Caco-2 (cell line): ENCODE measurements at regions of chr1 and their contacts with region 1.

Region 1: DNA sequence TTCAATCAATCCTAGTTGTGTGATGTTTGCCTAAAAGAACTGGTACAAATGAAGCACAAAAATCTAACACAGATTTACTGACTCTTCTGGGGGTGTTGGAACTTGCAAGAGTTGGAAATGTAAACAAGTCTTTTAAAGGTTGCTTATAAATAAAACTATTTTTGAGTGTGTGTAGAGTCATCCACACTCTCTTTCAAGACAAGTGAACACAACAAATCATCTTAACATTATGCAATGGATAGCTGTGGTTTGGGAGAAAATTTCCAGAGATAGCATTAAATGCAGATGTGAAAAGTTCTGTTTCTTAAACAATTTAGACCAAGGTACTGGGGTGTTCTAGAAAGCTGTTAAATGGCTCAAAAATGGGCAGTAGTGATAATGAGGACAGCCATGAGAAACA is 28.7 kb downstream of the C1orf87 start:
- DNase-seq: no peak
- H3K4me3 ChIP-seq: no peak overlapping the region
- H3K4me3 Mint-ChIP-seq: no peak overlapping the region
- H3K27ac Mint-ChIP-seq: no peak overlapping the region
- H3K4me1 ChIP-seq: no peaks in the 10 kb centered on the region
- H3K4me1 Mint-ChIP-seq: no peaks in the 10 kb centered on the region
- H3K27me3 ChIP-seq: no peaks in the 10 kb centered on the region
- H3K27me3 Mint-ChIP-seq: no peaks in the 10 kb centered on the region
- CTCF ChIP-seq: no peak

Region 2: DNA sequence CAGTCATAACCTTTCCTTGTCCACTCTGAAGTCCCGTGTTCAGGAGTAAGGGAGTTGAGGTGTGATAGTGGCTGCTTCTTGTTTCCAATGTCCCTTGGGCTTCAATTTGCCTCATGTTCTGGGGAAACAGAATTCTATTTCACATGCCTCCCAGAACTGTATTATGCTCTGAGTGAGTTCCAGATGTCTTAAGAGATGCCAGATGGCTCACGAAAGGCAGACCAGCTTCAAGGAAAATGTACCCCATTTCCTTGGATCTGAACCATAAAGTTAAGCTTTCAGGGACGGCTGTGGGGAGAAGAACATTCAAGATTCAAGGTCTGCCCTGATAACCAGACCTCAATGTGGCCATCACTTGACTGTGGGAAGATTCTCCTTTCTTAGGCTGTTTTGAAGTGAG is 13.7 kb before region 1 on chr1:
- CTCF ChIA-PET with region 1: no interaction called
- POLR2A ChIA-PET with region 1: no interaction called
- intact Hi-C with region 1: no loop called
- DNase-seq: no peak
- H3K4me3 ChIP-seq: no peak overlapping the region
- H3K4me3 Mint-ChIP-seq: no peak overlapping the region
- H3K27ac Mint-ChIP-seq: no peak overlapping the region
- H3K4me1 ChIP-seq: no peaks in the 10 kb centered on the region
- H3K4me1 Mint-ChIP-seq: no peaks in the 10 kb centered on the region
- H3K27me3 ChIP-seq: no peaks in the 10 kb centered on the region
- H3K27me3 Mint-ChIP-seq: peaks cover 16% of the 10 kb centered on the region
- CTCF ChIP-seq: no peak

Region 3: DNA sequence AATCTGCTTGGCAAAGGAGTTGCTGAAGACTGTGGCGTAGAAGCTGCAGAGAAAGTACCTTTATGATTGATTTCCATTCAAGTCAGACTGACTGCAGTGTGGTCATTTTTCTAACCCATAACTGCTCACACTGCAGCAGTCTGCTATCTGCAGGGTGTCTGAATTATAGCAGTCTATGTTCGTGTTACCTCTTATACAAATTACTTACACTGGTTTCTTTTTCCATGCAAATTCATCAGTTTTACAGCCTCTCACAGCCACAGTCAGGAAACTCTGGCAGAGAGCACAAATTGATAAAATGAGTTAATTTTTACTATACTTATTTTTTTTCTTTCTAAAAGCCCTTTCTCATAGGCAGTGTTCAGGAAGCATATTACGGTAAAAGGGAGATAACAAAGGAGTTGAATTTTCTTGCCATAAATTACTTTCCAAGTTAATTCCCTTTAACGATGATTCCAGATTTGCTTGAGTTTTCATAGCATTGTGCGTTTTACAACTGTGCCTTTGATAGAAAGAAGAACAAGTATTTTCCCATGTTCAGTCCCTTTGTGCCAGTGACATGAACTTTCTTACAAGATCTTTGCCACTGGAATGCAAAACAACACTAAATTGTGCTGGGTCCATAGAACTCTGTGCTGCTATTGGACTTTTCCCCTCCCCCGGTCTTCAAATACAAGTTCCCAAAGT is 1299.0 kb after region 1 on chr1:
- CTCF ChIA-PET with region 1: interaction called, 10 read pairs
- POLR2A ChIA-PET with region 1: no interaction called
- intact Hi-C with region 1: no loop called
- DNase-seq: no peak
- H3K4me3 ChIP-seq: no peak overlapping the region
- H3K4me3 Mint-ChIP-seq: no peak overlapping the region
- H3K27ac Mint-ChIP-seq: no peak overlapping the region
- H3K4me1 ChIP-seq: no peaks in the 10 kb centered on the region
- H3K4me1 Mint-ChIP-seq: no peaks in the 10 kb centered on the region
- H3K27me3 ChIP-seq: no peaks in the 10 kb centered on the region
- H3K27me3 Mint-ChIP-seq: no peaks in the 10 kb centered on the region
- CTCF ChIP-seq: no peak